ENCODE measurements at regions of chr16 and their contacts with region 1.

Region 1: DNA sequence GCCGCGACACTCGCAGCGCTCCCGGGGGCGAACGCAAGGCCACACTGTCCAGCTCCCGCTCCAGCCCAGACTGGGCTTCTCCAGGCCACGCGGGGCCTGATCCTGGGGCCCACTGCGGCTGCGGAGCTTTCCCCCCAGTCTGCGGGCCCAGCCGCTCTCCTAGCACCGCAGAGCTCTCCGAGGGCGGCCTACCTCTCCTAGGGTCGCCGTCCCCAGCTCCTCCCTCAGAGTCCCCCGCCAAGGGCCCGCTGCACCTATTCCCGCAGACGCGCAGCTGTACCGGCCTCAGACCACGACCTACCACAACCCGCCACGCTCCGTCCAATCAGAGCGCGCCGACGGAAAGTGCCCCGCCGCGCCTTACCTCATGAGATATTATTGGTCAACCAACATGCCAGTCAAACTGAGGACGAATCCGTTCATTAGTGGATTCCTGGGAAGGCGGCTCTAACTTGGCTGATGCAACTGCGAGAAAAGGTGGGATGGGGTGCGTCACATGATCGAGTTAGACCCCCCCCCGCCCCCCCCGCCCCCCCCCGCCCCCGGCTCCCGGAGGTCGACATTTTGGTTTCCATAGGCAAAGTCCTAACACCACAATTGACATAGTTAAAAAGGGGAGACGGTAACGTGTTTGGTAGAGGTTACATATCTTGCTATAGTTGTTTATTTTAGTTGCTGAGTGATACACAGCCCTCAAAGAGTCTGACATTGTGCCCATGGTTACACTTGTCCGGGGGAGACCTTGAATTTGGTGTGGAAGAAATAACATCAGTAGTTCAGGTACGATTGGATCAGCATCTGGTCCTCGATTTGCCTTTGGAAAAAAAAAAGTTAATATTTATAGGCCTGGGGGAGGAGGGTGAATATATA is at the start of gene AARS1:
- DNase-seq: peak; percentile 94 to 97 (median 95)
- H3K4me3 ChIP-seq: peak within 1 kb of the TSS; percentile 92
- H3K27ac ChIP-seq: peak within 1 kb of the TSS; percentile 56 to 65
- H3K4me1 ChIP-seq: peaks cover 4% of the 10 kb centered on the region
- H3K27me3 ChIP-seq: no peaks in the 10 kb centered on the region
- CTCF ChIP-seq: peak in 1 of 3 donors; percentile 7
- EP300 ChIP-seq: no peak
- POLR2A ChIP-seq: peak; percentile 92
- total RNA-seq, gene AARS1: 26.7 to 280 (median 60.3) TPM

Region 2: GRCh38 chr16:68951991-68952877 is 1337.2 kb before region 1 on chr16:
- intact Hi-C with region 1: no loop called
- DNase-seq: no peak
- H3K4me3 ChIP-seq: no peak overlapping the region
- H3K27ac ChIP-seq: no peak overlapping the region
- H3K4me1 ChIP-seq: no peaks in the 10 kb centered on the region
- H3K27me3 ChIP-seq: no peaks in the 10 kb centered on the region
- CTCF ChIP-seq: no peak
- EP300 ChIP-seq: no peak
- POLR2A ChIP-seq: no peak

Region 3: DNA sequence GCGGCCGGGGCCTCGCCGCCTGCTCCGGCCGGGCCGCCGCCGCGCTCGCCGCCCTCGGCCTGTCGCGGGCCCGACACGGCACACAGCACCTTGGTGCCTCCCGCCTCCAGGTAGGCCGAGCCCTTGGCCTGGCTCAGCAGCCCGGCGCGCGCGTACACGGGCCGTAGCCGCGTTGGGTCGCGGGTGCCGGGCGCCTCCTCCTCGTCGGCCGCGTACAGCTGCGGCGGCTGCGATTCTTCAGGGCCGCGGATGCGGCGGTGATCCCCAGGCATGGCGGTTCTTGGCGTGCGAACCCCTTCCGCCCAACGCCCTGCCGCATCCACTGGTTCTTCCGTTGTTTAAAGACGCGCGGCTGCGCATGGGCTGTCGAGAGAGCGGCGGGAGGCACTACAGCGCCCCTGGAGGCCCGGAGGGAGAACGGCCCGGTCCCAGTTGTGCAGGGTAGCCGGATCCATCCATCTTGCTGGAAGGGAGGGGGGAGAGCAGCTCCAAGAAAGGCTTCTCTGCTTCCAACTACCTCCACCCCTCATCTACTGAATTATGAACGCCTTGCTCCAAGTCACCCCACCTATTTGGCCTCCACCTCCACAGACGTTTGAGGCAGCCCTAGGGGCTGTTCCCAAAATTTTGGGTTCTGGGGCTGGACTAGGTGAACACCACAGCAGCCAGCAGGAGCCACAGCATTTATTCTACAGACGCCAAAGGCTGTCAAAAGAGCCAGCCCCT is 37.7 kb before region 1 on chr16 and contains the start of gene EXOSC6:
- intact Hi-C with region 1: loop called in 1 of 4 experiments (anchors 2 kb)
- DNase-seq: peak; percentile 87 to 93 (median 88)
- H3K4me3 ChIP-seq: peak within 1 kb of the TSS; percentile 71
- H3K27ac ChIP-seq: peak within 1 kb of the TSS; percentile 46 to 62
- H3K4me1 ChIP-seq: peaks cover 2% of the 10 kb centered on the region
- H3K27me3 ChIP-seq: no peaks in the 10 kb centered on the region
- CTCF ChIP-seq: peak; percentile 89 to 96 (median 92)
- EP300 ChIP-seq: no peak
- POLR2A ChIP-seq: peak; percentile 45
- total RNA-seq, gene EXOSC6: 19.5 to 30.2 (median 22.4) TPM